ENCODE measurements at regions of chr19 and their contacts with region 1.

Region 1: DNA sequence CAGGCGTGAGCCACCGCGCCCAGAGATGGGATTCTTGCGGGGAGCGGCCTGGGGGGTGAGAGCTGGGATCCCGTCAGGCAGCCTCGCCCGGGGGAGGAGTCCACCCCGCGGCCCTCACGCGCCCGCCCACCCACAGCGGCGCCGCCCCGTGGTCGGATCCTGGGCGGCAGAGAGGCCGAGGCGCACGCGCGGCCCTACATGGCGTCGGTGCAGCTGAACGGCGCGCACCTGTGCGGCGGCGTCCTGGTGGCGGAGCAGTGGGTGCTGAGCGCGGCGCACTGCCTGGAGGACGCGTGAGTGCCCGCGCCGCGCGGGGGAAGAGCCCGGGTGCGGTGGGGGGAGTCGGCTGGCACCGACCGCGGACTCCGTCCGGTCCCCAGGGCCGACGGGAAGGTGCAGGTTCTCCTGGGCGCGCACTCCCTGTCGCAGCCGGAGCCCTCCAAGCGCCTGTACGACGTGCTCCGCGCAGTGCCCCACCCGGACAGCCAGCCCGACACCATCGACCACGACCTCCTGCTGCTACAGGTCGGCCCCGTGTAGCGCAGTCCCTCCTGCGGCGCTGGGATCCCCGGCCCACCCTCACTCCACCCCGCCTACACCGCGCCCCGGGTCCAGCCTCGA is 1.1 kb downstream of the CFD start:
- DNase-seq: peak; percentile 73
- ATAC-seq: peak; percentile 79
- H3K4me3 ChIP-seq: peak overlapping the region; percentile 71 to 78
- H3K27ac ChIP-seq: peak overlapping the region; percentile 96
- H3K4me1 ChIP-seq: peaks cover 14 to 32% of the 10 kb centered on the region in 2 experiments
- H3K27me3 ChIP-seq: no peaks in the 10 kb centered on the region
- CTCF ChIP-seq: peak in 1 of 3 experiments; percentile 23; a peak in 1 of 6 replicates
- POLR2A ChIP-seq: peak; percentile 61
- RAD21 ChIP-seq: peak; percentile 22; the same call in 1 of the 2 replicates

Region 2: DNA sequence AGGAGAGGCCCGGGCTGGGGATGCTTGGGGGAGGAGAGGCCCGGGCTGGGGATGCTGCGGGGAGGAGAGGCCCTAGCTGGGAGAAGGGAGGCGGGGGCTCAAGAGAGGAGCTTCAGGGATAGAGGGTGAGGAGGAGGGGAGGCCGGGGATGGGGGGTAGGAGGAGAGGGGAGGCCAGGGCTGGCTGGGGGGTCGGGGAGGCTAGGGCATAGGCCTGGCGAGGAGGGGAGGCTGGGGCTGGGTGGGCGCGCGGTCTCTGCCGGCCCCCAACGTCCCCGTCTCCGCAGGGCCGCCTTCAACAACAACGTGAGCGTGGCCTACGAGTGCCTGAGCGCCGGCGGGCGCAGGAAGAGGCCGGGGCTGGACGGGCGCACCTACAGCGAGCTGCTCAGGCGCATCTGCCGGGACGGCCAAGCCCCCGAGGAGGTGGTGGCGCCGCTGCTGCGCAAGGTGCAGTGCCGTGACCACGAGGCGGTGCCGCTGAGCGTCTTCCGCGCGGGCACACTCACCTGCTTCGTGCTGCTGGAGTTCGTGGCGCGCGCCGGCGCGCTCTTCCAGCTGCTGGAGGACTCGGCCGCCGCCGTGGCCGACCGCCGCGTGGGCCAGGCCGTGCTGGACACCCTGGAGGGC is 341.9 kb before region 1 on chr19:
- CTCF ChIA-PET with region 1: no interaction called
- POLR2A ChIA-PET with region 1: no interaction called
- RAD21 ChIA-PET with region 1: no interaction called
- intact Hi-C with region 1: no loop called
- DNase-seq: no peak
- ATAC-seq: no peak
- H3K4me3 ChIP-seq: no peak overlapping the region
- H3K27ac ChIP-seq: no peak overlapping the region
- H3K4me1 ChIP-seq: no peaks in the 10 kb centered on the region
- H3K27me3 ChIP-seq: no peaks in the 10 kb centered on the region
- CTCF ChIP-seq: no peak
- POLR2A ChIP-seq: no peak
- RAD21 ChIP-seq: no peak

Region 3: DNA sequence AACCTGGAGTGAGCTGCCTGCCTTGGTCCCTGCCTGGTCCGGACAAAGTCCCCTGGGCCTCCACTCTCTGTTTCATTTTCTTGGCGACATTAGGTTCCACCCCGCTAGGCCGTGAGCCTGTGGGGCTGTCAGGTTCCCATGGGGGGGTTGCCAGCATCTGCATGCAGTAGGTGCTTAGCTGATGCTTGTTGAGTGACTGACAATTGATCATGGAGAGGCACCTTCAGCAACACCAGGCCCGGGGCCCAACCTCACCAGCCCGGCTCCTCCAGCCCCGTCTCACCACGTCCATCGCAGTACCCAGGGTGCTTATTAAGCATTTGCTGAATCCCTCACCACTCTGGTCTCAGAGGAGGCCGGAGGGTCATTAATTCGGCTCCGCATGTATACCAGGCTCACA is 96.3 kb before region 1 on chr19:
- CTCF ChIA-PET with region 1: no interaction called
- POLR2A ChIA-PET with region 1: no interaction called
- RAD21 ChIA-PET with region 1: no interaction called
- intact Hi-C with region 1: no loop called
- DNase-seq: no peak
- ATAC-seq: no peak
- H3K4me3 ChIP-seq: no peak overlapping the region
- H3K27ac ChIP-seq: no peak overlapping the region; the same call in 1 of the 2 replicates
- H3K4me1 ChIP-seq: no peaks in the 10 kb centered on the region
- H3K27me3 ChIP-seq: no peaks in the 10 kb centered on the region
- CTCF ChIP-seq: no peak
- POLR2A ChIP-seq: no peak
- RAD21 ChIP-seq: no peak

Region 4: DNA sequence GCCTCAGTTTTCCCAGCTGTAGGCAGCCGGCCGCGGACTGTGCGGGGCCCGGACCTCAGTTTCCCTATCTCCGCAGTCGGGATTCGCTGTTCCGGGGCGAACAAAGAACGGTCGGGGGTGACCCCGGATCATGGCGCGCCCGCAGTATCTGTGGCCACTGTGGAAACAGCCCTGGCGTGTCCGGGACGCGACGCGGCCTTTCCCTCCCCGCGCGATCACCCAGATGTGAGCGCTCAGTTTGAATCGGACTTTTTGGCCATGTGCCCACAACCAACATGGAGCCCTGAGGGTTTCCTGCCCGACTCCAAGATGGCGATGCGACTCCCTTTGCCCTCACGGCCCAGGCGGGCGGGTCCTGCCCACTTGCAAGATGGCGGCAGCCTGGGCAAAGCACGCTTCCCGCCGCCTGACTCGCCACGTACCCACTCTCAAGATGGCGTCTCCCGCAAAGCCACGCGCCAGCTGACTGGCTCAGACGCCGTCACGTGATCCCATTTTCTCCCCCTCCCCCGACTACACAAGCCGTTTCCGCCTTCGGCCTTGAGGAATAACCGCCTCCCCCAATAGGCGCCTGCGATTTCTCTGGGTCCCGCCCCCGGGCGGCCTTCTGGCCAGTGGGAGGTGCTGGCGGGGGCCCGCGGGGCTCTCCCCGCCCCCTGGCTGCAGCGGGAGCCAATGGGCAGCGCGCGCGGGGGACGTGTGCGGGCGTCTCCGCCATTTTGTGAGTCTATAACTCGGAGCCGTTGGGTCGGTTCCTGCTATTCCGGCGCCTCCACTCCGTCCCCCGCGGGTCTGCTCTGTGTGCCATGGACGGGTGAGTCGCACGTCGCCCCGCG is 63.7 kb before region 1 on chr19 and contains the start of gene PTBP1:
- CTCF ChIA-PET with region 1: no interaction called
- POLR2A ChIA-PET with region 1: no interaction called
- RAD21 ChIA-PET with region 1: no interaction called
- intact Hi-C with region 1: no loop called
- DNase-seq: peak; percentile 100
- ATAC-seq: peak; percentile 86
- H3K4me3 ChIP-seq: peak within 1 kb of the TSS; percentile 83 to 88
- H3K27ac ChIP-seq: peak within 1 kb of the TSS; percentile 96
- H3K4me1 ChIP-seq: peaks cover 17 to 36% of the 10 kb centered on the region in 2 experiments
- H3K27me3 ChIP-seq: no peaks in the 10 kb centered on the region
- CTCF ChIP-seq: peak in 1 of 3 experiments; percentile 16; a peak in 1 of 6 replicates
- POLR2A ChIP-seq: peak; percentile 61
- RAD21 ChIP-seq: no peak
- total RNA-seq, gene PTBP1: 676 TPM

Region 5: DNA sequence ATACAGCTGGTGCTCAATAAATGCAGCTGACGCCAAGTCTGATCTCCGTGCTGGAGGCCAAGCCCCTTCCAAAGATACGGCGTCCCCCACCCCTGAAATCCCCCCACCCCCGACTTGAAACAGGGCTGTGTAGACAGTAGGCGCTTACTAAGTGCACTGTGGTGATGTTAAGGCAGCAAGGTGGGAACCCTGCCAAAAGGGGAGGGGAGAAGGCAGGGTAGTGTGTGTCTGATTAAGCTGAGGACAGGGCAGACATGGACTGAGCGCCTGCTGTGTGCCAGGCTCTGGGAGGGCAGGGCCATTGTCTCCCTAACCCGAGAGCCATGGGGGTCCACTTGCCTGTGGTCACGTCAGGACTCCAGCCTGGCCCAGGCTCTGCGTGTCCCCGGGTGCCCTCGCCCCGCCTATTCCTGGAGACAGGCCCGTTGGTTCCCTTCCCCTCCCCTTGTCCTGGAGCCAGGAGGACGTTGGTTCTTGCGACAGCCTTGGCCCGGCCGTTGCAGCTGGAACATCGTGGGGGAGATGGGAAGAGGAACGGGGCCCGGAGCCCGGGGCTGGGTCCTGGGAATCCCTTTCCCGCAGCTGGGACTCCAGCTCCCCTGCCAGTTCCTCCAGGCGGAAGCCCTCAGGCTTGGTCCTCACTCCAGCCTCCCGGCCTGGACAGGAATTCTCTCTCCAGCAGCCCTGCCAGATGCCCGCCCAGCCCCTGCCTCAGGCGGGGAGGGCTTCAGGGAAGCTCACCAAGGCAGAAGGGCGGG is 10.2 kb before region 1 on chr19:
- CTCF ChIA-PET with region 1: interaction called, 10 read pairs
- POLR2A ChIA-PET with region 1: interaction called, 4 read pairs
- RAD21 ChIA-PET with region 1: interaction called in 1 of 2 experiments, 3 read pairs
- intact Hi-C with region 1: no loop called
- DNase-seq: no peak
- ATAC-seq: peak; percentile 53
- H3K4me3 ChIP-seq: no peak overlapping the region
- H3K27ac ChIP-seq: peak overlapping the region; percentile 8; the same call in 1 of the 2 replicates
- H3K4me1 ChIP-seq: peaks cover 5 to 10% of the 10 kb centered on the region in 2 experiments; a peak in 3 of 4 replicates
- H3K27me3 ChIP-seq: no peaks in the 10 kb centered on the region
- CTCF ChIP-seq: no peak
- POLR2A ChIP-seq: no peak
- RAD21 ChIP-seq: no peak

Region 6: GRCh38 chr19:920051-920864 is 59.7 kb after region 1 on chr19:
- CTCF ChIA-PET with region 1: no interaction called
- POLR2A ChIA-PET with region 1: no interaction called
- RAD21 ChIA-PET with region 1: interaction called in 1 of 2 experiments, 3 read pairs
- intact Hi-C with region 1: loop called (anchors 2 kb)
- DNase-seq: no peak
- ATAC-seq: no peak
- H3K4me3 ChIP-seq: no peak overlapping the region
- H3K27ac ChIP-seq: no peak overlapping the region
- H3K4me1 ChIP-seq: peaks cover 8 to 47% of the 10 kb centered on the region in 2 experiments
- H3K27me3 ChIP-seq: no peaks in the 10 kb centered on the region
- CTCF ChIP-seq: no peak
- POLR2A ChIP-seq: no peak
- RAD21 ChIP-seq: no peak

Measured in HCT116 (cell line).